WTC11 (cell line): ENCODE measurements at regions of chr17 and their contacts with region 1.

Region 1: DNA sequence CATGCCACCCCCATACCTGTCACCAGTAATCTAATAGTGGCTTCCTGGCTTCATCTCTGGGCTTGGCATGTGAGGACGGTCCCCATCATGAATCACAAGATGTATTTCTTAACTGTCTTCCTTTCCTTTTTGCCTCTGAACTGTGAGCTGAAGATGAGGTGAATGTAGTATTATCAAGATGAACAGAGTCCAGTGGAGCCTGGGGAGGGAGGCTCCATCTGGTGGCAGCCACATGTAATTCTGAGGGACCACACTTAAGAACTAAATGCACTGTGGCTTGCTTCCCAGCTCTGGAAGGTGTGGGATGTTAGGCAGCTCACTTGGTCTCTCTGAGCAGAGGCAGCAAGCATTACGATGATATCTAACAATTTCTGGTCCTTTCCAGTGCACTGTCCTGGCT is 354.9 kb upstream of the ASIC2 start:
- DNase-seq: no peak
- ATAC-seq: peak; percentile 90
- H3K4me3 Mint-ChIP-seq: no peak overlapping the region
- H3K27ac Mint-ChIP-seq: no peak overlapping the region
- H3K4me1 Mint-ChIP-seq: peaks cover 4% of the 10 kb centered on the region; the same call in 1 of the 2 replicates
- H3K27me3 Mint-ChIP-seq: peaks cover 2% of the 10 kb centered on the region; the same call in 1 of the 2 replicates
- CTCF ChIP-seq: no peak

Region 2: GRCh38 chr17:33292184-33292980 is 355.6 kb before region 1 on chr17:
- CTCF ChIA-PET with region 1: interaction called, 12 read pairs
- POLR2A ChIA-PET with region 1: no interaction called
- DNase-seq: peak; percentile 66
- ATAC-seq: peak; percentile 65
- H3K4me3 Mint-ChIP-seq: peak overlapping the region; percentile 69
- H3K27ac Mint-ChIP-seq: no peak overlapping the region
- H3K4me1 Mint-ChIP-seq: peaks cover 9% of the 10 kb centered on the region
- H3K27me3 Mint-ChIP-seq: peaks cover 87% of the 10 kb centered on the region
- CTCF ChIP-seq: peak; percentile 31; the same call in 1 of the 2 replicates

Region 3: GRCh38 chr17:33436321-33436720 is 211.6 kb before region 1 on chr17:
- CTCF ChIA-PET with region 1: no interaction called
- POLR2A ChIA-PET with region 1: no interaction called
- DNase-seq: no peak
- ATAC-seq: no peak
- H3K4me3 Mint-ChIP-seq: no peak overlapping the region
- H3K27ac Mint-ChIP-seq: no peak overlapping the region
- H3K4me1 Mint-ChIP-seq: no peaks in the 10 kb centered on the region
- H3K27me3 Mint-ChIP-seq: no peaks in the 10 kb centered on the region; the same call in 1 of the 2 replicates
- CTCF ChIP-seq: no peak

Region 4: GRCh38 chr17:33520426-33521330 is 127.3 kb before region 1 on chr17:
- CTCF ChIA-PET with region 1: interaction called, 71 read pairs
- POLR2A ChIA-PET with region 1: no interaction called
- DNase-seq: peak; percentile 85
- ATAC-seq: peak; percentile 82
- H3K4me3 Mint-ChIP-seq: no peak overlapping the region
- H3K27ac Mint-ChIP-seq: no peak overlapping the region
- H3K4me1 Mint-ChIP-seq: peaks cover 2% of the 10 kb centered on the region; the same call in 1 of the 2 replicates
- H3K27me3 Mint-ChIP-seq: no peaks in the 10 kb centered on the region; the same call in 1 of the 2 replicates
- CTCF ChIP-seq: peak; percentile 70

Region 5: GRCh38 chr17:33534087-33534486 is 113.9 kb before region 1 on chr17:
- CTCF ChIA-PET with region 1: interaction called, 12 read pairs
- POLR2A ChIA-PET with region 1: no interaction called
- DNase-seq: no peak
- ATAC-seq: no peak
- H3K4me3 Mint-ChIP-seq: no peak overlapping the region
- H3K27ac Mint-ChIP-seq: no peak overlapping the region
- H3K4me1 Mint-ChIP-seq: peaks cover 15% of the 10 kb centered on the region
- H3K27me3 Mint-ChIP-seq: no peaks in the 10 kb centered on the region; the same call in 1 of the 2 replicates
- CTCF ChIP-seq: no peak

Region 6: GRCh38 chr17:33562792-33563191 is 85.2 kb before region 1 on chr17:
- CTCF ChIA-PET with region 1: interaction called, 19 read pairs
- POLR2A ChIA-PET with region 1: no interaction called
- DNase-seq: peak; percentile 14
- ATAC-seq: peak; percentile 71
- H3K4me3 Mint-ChIP-seq: no peak overlapping the region
- H3K27ac Mint-ChIP-seq: no peak overlapping the region
- H3K4me1 Mint-ChIP-seq: 0 out of 2 replicates have a peak, but pooled peaks cover 3% of the 10 kb centered on the region
- H3K27me3 Mint-ChIP-seq: peaks cover 17% of the 10 kb centered on the region
- CTCF ChIP-seq: no peak

Region 7: GRCh38 chr17:33674685-33675084 is 26.7 kb after region 1 on chr17:
- CTCF ChIA-PET with region 1: interaction called, 40 read pairs
- POLR2A ChIA-PET with region 1: no interaction called
- DNase-seq: peak; percentile 78
- ATAC-seq: peak; percentile 97
- H3K4me3 Mint-ChIP-seq: no peak overlapping the region
- H3K27ac Mint-ChIP-seq: no peak overlapping the region
- H3K4me1 Mint-ChIP-seq: no peaks in the 10 kb centered on the region
- H3K27me3 Mint-ChIP-seq: peaks cover 3% of the 10 kb centered on the region
- CTCF ChIP-seq: peak; percentile 36; the same call in 1 of the 2 replicates

Region 8: GRCh38 chr17:33750943-33751701 is 103.2 kb after region 1 on chr17:
- CTCF ChIA-PET with region 1: interaction called, 24 read pairs
- POLR2A ChIA-PET with region 1: no interaction called
- DNase-seq: peak; percentile 78
- ATAC-seq: peak; percentile 88
- H3K4me3 Mint-ChIP-seq: peak overlapping the region; percentile 68
- H3K27ac Mint-ChIP-seq: peak overlapping the region; percentile 85
- H3K4me1 Mint-ChIP-seq: peaks cover 38% of the 10 kb centered on the region
- H3K27me3 Mint-ChIP-seq: peaks cover 92% of the 10 kb centered on the region
- CTCF ChIP-seq: peak; percentile 93